ENCODE measurements at regions of chr10 and their contacts with region 1.

Region 1: DNA sequence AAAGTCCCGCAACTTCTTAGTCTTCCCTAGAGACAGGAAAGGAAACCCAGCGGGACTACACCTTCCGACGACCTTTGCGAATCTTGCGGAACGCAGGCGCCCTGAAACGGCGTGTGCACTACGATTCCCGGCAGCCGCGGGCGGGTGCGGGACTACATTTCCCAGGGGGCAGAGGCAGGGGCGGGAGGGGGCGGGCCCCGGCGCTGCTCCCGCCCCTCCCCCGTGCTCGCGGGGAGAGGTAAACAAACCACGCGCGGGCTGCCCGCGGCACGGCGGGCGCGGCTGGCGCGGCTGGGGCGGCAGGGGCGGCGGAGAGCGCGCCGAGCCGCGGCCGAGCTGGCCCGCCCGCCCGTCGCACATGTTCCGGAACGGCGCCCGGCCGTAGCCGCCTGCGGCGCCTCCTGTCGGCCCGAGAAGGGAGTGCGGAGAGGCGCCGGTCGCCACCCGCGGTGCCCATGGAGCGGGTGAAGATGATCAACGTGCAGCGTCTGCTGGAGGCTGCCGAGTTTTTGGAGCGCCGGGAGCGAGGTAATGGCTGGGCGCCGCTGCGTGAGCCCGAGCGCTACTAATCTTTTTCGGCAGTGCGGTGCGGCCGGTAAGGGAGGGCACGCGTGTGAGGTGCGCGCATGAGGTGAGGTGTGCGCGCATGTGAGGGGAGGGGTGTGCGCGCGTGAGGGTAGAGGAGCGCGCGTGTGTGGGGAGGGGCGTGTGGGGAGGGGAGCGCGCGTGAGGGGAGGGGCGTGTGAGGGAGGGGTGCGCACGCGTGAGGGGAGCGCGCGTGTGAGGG is 18.5 kb downstream of the MXI1 start:
- DNase-seq: peak; percentile 84
- H3K4me3 Mint-ChIP-seq: peak overlapping the region; percentile 92
- H3K27ac Mint-ChIP-seq: peak overlapping the region; percentile 97
- H3K4me1 Mint-ChIP-seq: peaks cover 47% of the 10 kb centered on the region
- H3K27me3 Mint-ChIP-seq: peaks cover 4% of the 10 kb centered on the region

Region 2: DNA sequence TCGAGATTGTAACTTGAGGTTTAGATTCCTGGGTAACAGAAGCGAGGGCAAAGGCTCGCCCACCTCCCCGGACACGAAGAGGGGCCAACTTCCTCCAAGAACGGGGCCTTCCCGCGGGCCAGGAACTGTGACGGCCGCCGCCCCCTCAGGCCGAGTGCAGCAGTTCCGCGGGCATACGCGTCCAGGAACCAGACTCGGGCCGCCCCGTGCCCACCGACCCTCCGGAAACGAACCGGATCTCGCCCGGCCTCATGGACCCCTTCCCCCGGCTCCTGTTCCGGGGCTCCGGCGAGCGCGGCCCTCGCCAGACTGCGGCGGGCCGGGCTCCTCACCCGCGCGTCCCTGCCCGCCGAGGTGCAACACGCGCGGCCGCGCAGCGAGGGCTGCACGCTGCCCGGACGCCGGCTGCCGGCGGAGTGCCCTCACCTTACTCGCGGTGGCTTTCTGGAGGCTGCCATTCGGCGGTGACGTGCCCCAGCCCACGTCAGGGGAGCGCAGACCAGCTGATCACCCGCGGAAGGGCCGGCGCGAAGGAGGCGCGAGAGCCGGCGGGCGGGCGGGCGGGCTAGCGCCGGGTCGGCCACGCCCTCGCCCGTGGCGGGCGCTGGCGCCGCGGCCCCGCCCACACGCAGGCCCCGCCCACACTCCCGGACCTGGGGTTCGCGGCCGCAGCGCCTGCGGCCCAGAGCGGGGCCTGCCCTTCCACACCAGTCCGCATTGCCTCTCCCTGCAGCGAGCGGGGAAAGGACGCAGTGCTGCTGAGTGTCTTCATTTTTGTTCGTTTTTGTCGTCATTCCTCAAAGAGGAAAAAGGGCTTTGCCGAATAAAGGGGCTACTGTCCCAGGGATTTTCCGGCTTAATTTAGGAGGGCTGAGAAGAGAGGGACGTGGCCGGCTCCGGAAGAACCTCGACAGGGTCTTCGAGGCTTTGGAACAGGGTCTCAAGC is 302.7 kb before region 1 on chr10 and contains the start of gene XPNPEP1:
- intact Hi-C with region 1: loop called (anchors 1 kb)
- DNase-seq: peak; percentile 81
- H3K4me3 Mint-ChIP-seq: peak within 1 kb of the TSS; percentile 94
- H3K27ac Mint-ChIP-seq: peak within 1 kb of the TSS; percentile 92
- H3K4me1 Mint-ChIP-seq: peaks cover 58% of the 10 kb centered on the region
- H3K27me3 Mint-ChIP-seq: peaks cover 5% of the 10 kb centered on the region
- total RNA-seq, gene XPNPEP1: 85.1 and 93.2 TPM in 2 replicates

Region 3: GRCh38 chr10:110076559-110077318 is 149.2 kb before region 1 on chr10:
- intact Hi-C with region 1: loop called (anchors 5 kb)
- DNase-seq: no peak
- H3K4me3 Mint-ChIP-seq: peak overlapping the region; percentile 82
- H3K27ac Mint-ChIP-seq: peak overlapping the region; percentile 93
- H3K4me1 Mint-ChIP-seq: peaks cover 89% of the 10 kb centered on the region
- H3K27me3 Mint-ChIP-seq: no peaks in the 10 kb centered on the region

Region 4: GRCh38 chr10:110241407-110241806 is 15.5 kb after region 1 on chr10:
- intact Hi-C with region 1: loop called (anchors 1 kb)
- DNase-seq: no peak
- H3K4me3 Mint-ChIP-seq: no peak overlapping the region
- H3K27ac Mint-ChIP-seq: no peak overlapping the region
- H3K4me1 Mint-ChIP-seq: peaks cover 18% of the 10 kb centered on the region
- H3K27me3 Mint-ChIP-seq: peaks cover 20% of the 10 kb centered on the region

Region 5: DNA sequence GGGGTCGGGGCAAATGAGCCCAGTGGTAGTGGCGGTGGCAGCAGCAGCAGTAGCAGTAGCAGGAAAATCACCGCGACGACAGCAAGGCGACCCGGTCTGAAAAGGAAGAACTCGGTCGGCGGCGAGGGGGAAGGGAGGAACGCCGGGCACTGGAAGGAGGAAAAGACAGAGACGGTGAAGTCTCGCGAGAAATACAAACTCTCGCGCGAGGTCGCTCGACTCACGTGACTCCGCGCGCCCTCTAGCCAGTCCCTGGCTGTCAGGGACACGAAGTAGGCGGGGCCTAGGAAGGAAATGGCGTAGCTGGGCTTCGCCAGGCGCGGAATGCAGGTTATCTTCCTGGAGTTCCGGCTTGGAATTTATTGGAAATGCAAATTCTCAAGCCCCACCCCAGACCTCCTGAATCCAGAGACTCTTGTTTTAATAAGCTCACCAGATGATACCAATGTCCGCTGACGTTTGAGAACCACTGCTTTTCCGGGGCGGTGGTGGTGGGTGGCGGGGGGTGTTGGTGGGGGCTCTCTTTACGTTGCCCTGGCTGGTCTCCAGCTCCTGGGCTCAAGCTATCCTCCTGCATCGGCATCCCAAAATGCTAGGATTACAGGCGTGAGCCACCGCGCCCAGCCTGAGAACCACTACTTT is 79.0 kb after region 1 on chr10 and contains the start of gene SMNDC1:
- intact Hi-C with region 1: loop called (anchors 1 kb)
- DNase-seq: peak; percentile 96
- H3K4me3 Mint-ChIP-seq: peak within 1 kb of the TSS; percentile 97
- H3K27ac Mint-ChIP-seq: peak within 1 kb of the TSS; percentile 96
- H3K4me1 Mint-ChIP-seq: peaks cover 48% of the 10 kb centered on the region
- H3K27me3 Mint-ChIP-seq: no peaks in the 10 kb centered on the region
- total RNA-seq, gene SMNDC1: 47.8 and 48.0 TPM in 2 replicates

Region 6: GRCh38 chr10:110446954-110447608 is 221.1 kb after region 1 on chr10:
- intact Hi-C with region 1: no loop called
- DNase-seq: no peak
- H3K4me3 Mint-ChIP-seq: no peak overlapping the region
- H3K27ac Mint-ChIP-seq: no peak overlapping the region
- H3K4me1 Mint-ChIP-seq: peaks cover 30% of the 10 kb centered on the region
- H3K27me3 Mint-ChIP-seq: peaks cover 11% of the 10 kb centered on the region

Region 7: GRCh38 chr10:110512461-110513187 is 286.7 kb after region 1 on chr10:
- intact Hi-C with region 1: no loop called
- DNase-seq: no peak
- H3K4me3 Mint-ChIP-seq: peak overlapping the region; percentile 34
- H3K27ac Mint-ChIP-seq: peak overlapping the region; percentile 75
- H3K4me1 Mint-ChIP-seq: peaks cover 65% of the 10 kb centered on the region
- H3K27me3 Mint-ChIP-seq: no peaks in the 10 kb centered on the region

Region 8: DNA sequence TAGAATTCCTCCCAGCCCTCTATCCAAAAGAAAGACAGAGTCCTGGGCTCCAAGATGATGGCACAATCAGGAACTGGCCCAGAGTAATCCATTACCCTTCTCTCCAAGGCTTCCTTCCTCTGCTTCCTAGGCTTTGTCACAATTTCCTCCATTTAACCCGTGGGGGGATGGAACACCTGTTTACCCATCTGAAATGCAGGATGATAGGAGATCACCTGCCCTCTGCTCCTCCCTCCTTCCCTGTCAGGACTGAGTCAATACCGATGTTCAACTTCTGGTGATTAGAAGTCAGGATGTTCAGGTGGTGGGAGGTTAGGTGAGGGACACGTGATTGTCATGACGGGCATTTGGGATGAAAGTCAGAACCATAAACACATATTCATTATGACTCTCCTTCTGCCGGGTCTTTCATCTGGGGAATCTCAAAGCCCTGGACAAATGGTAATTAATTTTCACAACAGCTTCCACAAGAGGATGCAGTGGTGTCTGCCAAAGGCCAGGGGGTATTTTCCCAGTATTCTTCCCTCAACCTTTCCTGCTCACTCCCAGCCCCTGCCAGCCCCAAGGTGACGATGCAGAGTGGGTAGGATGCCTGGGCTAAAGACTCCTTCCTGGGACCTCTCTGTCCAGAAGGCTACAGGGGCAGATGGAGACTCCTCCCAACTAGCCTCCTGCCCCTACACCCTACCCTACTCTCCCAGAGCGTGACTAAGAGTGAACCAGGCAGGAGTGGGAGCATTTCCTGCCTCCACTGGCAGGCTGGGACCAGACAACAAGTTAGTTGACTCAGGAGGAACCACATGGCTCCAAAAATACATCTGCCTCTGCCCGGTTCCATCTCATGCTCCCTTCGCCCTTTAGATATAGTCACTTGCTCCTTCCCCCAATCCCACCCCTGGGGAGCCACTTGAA is 299.7 kb after region 1 on chr10:
- intact Hi-C with region 1: no loop called
- DNase-seq: no peak
- H3K4me3 Mint-ChIP-seq: no peak overlapping the region
- H3K27ac Mint-ChIP-seq: peak overlapping the region; percentile 46
- H3K4me1 Mint-ChIP-seq: peaks cover 83% of the 10 kb centered on the region
- H3K27me3 Mint-ChIP-seq: no peaks in the 10 kb centered on the region

Region 9: GRCh38 chr10:110535958-110536891 is 310.3 kb after region 1 on chr10:
- intact Hi-C with region 1: loop called (anchors 5 kb)
- DNase-seq: peak; percentile 49
- H3K4me3 Mint-ChIP-seq: peak overlapping the region; percentile 48
- H3K27ac Mint-ChIP-seq: peak overlapping the region; percentile 89
- H3K4me1 Mint-ChIP-seq: peaks cover 60% of the 10 kb centered on the region
- H3K27me3 Mint-ChIP-seq: no peaks in the 10 kb centered on the region

Region 10: DNA sequence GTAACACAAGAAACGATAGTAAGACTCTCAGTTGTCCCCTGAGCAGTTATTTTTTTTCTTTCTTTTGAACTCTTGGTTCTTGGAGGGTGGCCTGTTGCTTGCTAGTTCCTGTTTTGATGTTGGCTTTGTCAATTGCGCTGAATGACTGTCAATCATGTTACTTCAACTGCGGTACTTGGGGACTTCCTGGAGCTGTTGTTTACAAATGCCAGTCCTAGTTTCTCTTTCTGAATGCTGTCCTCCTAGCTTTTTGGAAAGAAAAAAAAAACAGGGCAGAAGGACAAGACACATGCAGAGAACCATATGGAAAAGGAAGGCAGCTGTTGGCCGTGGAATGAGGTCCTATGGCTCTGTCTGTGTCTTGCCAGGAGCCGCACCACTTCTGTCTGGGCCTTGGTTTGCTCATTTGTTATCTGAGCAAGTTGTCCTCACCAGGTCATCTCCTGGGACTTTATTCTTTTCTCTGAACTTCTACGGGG is 638.8 kb after region 1 on chr10:
- intact Hi-C with region 1: loop called (anchors 10 kb)
- DNase-seq: peak; percentile 69
- H3K4me3 Mint-ChIP-seq: peak overlapping the region; percentile 75
- H3K27ac Mint-ChIP-seq: peak overlapping the region; percentile 95
- H3K4me1 Mint-ChIP-seq: peaks cover 96% of the 10 kb centered on the region
- H3K27me3 Mint-ChIP-seq: no peaks in the 10 kb centered on the region